ENCODE measurements at regions of chr16 and their contacts with region 1.

Region 1: GRCh38 chr16:10812312-10813098 is 6.1 kb downstream of the TVP23A start:
- DNase-seq: no peak
- ATAC-seq: peak; percentile 53
- H3K4me3 ChIP-seq: no peak overlapping the region
- H3K4me3 Mint-ChIP-seq: peak overlapping the region; percentile 66
- H3K27ac ChIP-seq: no peak overlapping the region
- H3K27ac Mint-ChIP-seq: peak overlapping the region; percentile 59
- H3K4me1 ChIP-seq: peaks cover 12 to 32% of the 10 kb centered on the region in 2 donors
- H3K4me1 Mint-ChIP-seq: peaks cover 58% of the 10 kb centered on the region
- H3K27me3 ChIP-seq: no peaks in the 10 kb centered on the region
- H3K27me3 Mint-ChIP-seq: peaks cover under 1% of the 10 kb centered on the region
- CTCF ChIP-seq: no peak

Region 2: GRCh38 chr16:10762336-10763016 is 50.0 kb before region 1 on chr16:
- CTCF ChIA-PET with region 1: no interaction called
- POLR2A ChIA-PET with region 1: no interaction called
- intact Hi-C with region 1: no loop called
- DNase-seq: no peak
- ATAC-seq: no peak
- H3K4me3 ChIP-seq: no peak overlapping the region
- H3K4me3 Mint-ChIP-seq: no peak overlapping the region
- H3K27ac ChIP-seq: no peak overlapping the region
- H3K27ac Mint-ChIP-seq: no peak overlapping the region
- H3K4me1 ChIP-seq: peaks cover 17 to 26% of the 10 kb centered on the region in 2 donors
- H3K4me1 Mint-ChIP-seq: peaks cover 36% of the 10 kb centered on the region
- H3K27me3 ChIP-seq: no peaks in the 10 kb centered on the region
- H3K27me3 Mint-ChIP-seq: no peaks in the 10 kb centered on the region
- CTCF ChIP-seq: no peak

Region 3: GRCh38 chr16:10865991-10866966 is 53.8 kb after region 1 on chr16:
- CTCF ChIA-PET with region 1: interaction called, 3 read pairs
- POLR2A ChIA-PET with region 1: interaction called, 5 read pairs
- intact Hi-C with region 1: loop called (anchors 2 kb)
- DNase-seq: peak; percentile 19
- ATAC-seq: no peak
- H3K4me3 ChIP-seq: no peak overlapping the region
- H3K4me3 Mint-ChIP-seq: peak overlapping the region; percentile 78
- H3K27ac ChIP-seq: peak overlapping the region; percentile 21 to 92
- H3K27ac Mint-ChIP-seq: peak overlapping the region; percentile 93
- H3K4me1 ChIP-seq: peaks cover 73 to 76% of the 10 kb centered on the region in 2 donors
- H3K4me1 Mint-ChIP-seq: peaks cover 87% of the 10 kb centered on the region
- H3K27me3 ChIP-seq: no peaks in the 10 kb centered on the region
- H3K27me3 Mint-ChIP-seq: no peaks in the 10 kb centered on the region
- CTCF ChIP-seq: no peak

Region 4: DNA sequence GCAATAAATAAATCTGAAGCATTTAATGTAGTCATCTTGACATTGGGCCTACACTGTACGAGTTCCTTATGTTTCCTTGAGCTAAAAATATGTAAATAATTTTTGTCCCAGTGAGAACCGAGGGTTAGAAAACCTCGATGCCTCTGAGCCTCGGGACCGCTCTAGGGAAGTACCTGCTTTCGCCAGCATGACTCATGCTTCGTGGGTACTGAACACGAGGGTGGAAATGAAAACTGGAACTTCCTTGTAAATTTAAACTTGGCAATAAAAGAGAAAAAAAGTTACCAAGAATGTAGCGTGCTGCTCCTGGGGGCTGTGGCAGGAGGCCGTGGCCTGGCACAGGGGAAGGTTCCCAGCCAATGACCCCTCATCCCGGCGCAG is 369.4 kb after region 1 on chr16:
- CTCF ChIA-PET with region 1: no interaction called
- POLR2A ChIA-PET with region 1: no interaction called
- intact Hi-C with region 1: no loop called
- DNase-seq: peak; percentile 67
- ATAC-seq: peak; percentile 50
- H3K4me3 ChIP-seq: no peak overlapping the region
- H3K4me3 Mint-ChIP-seq: peak overlapping the region; percentile 65
- H3K27ac ChIP-seq: no peak overlapping the region
- H3K27ac Mint-ChIP-seq: peak overlapping the region; percentile 73
- H3K4me1 ChIP-seq: peaks cover 10 to 34% of the 10 kb centered on the region in 2 donors
- H3K4me1 Mint-ChIP-seq: peaks cover 44% of the 10 kb centered on the region
- H3K27me3 ChIP-seq: no peaks in the 10 kb centered on the region
- H3K27me3 Mint-ChIP-seq: no peaks in the 10 kb centered on the region
- CTCF ChIP-seq: no peak

Measured in B cell (primary cell).